ENCODE measurements at regions of chr10 and their contacts with region 1.

Region 1: GRCh38 chr10:33155720-33156638 is 178.5 kb downstream of the NRP1 start:
- DNase-seq: peak; percentile 63
- H3K4me3 ChIP-seq: no peak overlapping the region
- H3K27ac ChIP-seq: no peak overlapping the region
- H3K4me1 ChIP-seq: peaks cover 38% of the 10 kb centered on the region
- H3K27me3 ChIP-seq: no peaks in the 10 kb centered on the region
- CTCF ChIP-seq: peak; percentile 61

Region 2: GRCh38 chr10:31751051-31751740 is 1404.8 kb before region 1 on chr10:
- CTCF ChIA-PET with region 1: no interaction called
- POLR2A ChIA-PET with region 1: interaction called, 12 read pairs
- intact Hi-C with region 1: no loop called
- DNase-seq: no peak
- H3K4me3 ChIP-seq: no peak overlapping the region
- H3K27ac ChIP-seq: no peak overlapping the region
- H3K4me1 ChIP-seq: peaks cover 11% of the 10 kb centered on the region
- H3K27me3 ChIP-seq: no peaks in the 10 kb centered on the region
- CTCF ChIP-seq: no peak

Region 3: DNA sequence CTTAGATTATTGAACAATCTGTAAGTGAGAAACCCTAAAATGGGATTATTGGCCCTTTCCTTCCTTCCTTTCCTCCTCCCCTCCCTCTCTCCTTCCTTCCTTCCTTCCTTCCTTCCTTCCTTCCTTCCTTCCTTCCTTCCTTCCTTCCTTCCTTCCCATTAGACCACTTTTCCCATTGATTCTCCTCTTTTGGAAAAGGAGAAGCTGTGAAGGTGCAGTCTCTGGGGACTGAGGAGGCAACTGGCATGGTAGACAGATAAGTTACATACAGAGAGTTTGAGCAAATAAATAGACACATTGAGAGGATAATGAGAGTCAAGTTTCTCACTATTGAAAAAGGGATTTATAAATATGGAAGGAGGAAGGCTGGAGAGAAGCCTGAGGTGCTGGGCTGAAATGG is 755.0 kb before region 1 on chr10:
- CTCF ChIA-PET with region 1: interaction called, 10 read pairs
- POLR2A ChIA-PET with region 1: no interaction called
- intact Hi-C with region 1: no loop called
- DNase-seq: peak; percentile 96
- H3K4me3 ChIP-seq: no peak overlapping the region
- H3K27ac ChIP-seq: peak overlapping the region; percentile 97
- H3K4me1 ChIP-seq: peaks cover 22% of the 10 kb centered on the region
- H3K27me3 ChIP-seq: no peaks in the 10 kb centered on the region
- CTCF ChIP-seq: no peak

Region 4: GRCh38 chr10:32661341-32661740 is 494.6 kb before region 1 on chr10:
- CTCF ChIA-PET with region 1: no interaction called
- POLR2A ChIA-PET with region 1: no interaction called
- intact Hi-C with region 1: no loop called
- DNase-seq: no peak
- H3K4me3 ChIP-seq: no peak overlapping the region
- H3K27ac ChIP-seq: no peak overlapping the region
- H3K4me1 ChIP-seq: no peaks in the 10 kb centered on the region
- H3K27me3 ChIP-seq: no peaks in the 10 kb centered on the region
- CTCF ChIP-seq: no peak